SK-N-SH (cell line): ENCODE measurements at regions of chr7 and their contacts with region 1.

Region 1: GRCh38 chr7:128739048-128739962 is at the start of gene CALU:
- DNase-seq: peak; percentile 100
- H3K4me3 ChIP-seq: peak within 1 kb of the TSS; percentile 81 to 85
- H3K27ac ChIP-seq: peak within 1 kb of the TSS; percentile 94 to 96
- H3K4me1 ChIP-seq: peaks cover 18 to 26% of the 10 kb centered on the region in 2 experiments; a peak in 3 of 4 replicates
- H3K27me3 ChIP-seq: no peaks in the 10 kb centered on the region
- CTCF ChIP-seq: no peak
- EP300 ChIP-seq: peak in 1 of 2 experiments; percentile 41; a peak in 2 of 4 replicates
- RAD21 ChIP-seq: no peak
- polyA plus RNA-seq, gene CALU: 195 and 294 TPM in 2 replicates

Region 2: DNA sequence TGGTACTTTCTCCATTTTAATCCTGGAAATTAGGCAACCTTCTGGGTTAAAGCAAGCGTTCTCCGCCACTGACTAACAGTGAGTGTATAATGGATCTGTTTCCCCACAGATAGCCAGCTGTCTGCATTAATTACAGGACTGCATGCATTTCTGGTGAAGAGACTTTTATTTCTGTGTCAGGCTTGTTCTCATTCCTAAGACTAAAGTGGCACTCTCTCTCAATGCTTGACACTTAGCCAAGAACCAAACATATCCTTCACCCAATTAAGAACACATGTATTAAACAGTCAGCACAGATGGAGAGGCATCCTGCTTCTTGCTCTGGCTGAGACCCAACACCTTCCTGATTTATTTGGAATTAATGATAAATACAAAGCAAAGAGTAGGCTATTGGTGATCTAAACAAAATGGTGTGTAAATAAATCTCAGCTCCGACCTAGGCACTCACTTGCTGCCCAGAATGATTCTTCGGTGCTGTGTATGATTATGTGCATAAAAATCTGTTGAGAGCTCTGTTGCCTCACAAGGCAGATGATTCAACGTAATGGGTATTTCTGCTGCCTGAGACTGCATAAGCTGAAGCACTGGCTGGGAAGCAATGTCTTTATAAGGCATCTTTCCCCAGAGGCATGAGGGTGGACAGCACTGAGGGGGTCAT is 16.6 kb after region 1 on chr7:
- CTCF ChIA-PET with region 1: interaction called, 31 read pairs
- POLR2A ChIA-PET with region 1: interaction called, 19 read pairs
- DNase-seq: peak; percentile 69
- H3K4me3 ChIP-seq: no peak overlapping the region
- H3K27ac ChIP-seq: peak overlapping the region; percentile 81 to 93
- H3K4me1 ChIP-seq: peaks cover 31 to 40% of the 10 kb centered on the region in 2 experiments
- H3K27me3 ChIP-seq: no peaks in the 10 kb centered on the region
- CTCF ChIP-seq: no peak
- EP300 ChIP-seq: peak; percentile 79 to 85; a peak in 3 of 4 replicates
- RAD21 ChIP-seq: no peak

Region 3: DNA sequence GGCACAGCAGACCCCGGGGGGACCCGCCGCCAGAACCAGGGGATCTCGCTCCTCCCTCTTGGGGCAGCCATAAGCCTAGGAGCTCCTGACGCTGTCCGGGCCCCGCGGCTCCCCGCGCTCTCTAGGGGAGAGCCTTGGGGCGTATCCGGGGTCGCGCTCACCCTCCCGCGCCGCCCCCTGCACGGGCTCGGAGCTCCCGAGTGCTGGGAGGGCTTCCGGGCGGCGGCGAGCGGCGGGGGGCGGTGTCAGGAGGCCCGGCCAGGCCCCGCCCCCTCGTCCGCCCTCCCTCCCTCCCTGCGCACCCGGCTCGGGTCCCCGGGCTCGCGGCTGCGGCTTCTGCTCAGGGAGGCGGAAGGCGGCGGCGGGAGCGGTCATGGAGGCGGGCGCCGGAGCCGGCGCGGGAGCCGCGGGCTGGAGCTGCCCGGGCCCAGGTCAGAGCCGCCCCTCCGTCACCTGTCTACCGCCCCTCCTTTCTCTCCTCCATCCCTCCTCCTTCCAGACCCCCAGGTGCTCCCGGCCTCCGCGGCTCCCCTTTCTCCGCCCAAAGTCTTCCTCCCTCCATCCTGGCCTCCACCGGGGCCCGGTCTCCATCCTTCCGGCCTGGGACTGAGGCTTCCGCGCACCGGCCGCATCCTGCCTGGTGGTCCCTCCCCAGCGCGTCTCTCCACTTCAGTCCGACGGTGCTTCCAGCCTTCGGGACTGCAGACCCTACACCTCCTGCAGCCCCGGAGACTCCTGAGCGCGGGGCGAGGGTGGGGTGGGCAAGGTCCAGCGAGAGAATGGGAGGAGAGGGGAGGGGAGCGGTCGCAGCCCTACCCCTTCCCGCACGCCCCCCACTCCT is 52.0 kb after region 1 on chr7:
- CTCF ChIA-PET with region 1: no interaction called
- POLR2A ChIA-PET with region 1: interaction called, 11 read pairs
- DNase-seq: peak; percentile 99
- H3K4me3 ChIP-seq: peak overlapping the region; percentile 82 to 85
- H3K27ac ChIP-seq: peak overlapping the region in 1 of 2 experiments; percentile 82; a peak in 2 of 4 replicates
- H3K4me1 ChIP-seq: peaks cover 15 to 21% of the 10 kb centered on the region in 2 experiments
- H3K27me3 ChIP-seq: no peaks in the 10 kb centered on the region
- CTCF ChIP-seq: no peak
- EP300 ChIP-seq: peak in 1 of 2 experiments; percentile 56; a peak in 1 of 4 replicates
- RAD21 ChIP-seq: no peak